ENCODE measurements at regions of chr3 and their contacts with region 1.

Region 1: GRCh38 chr3:41198950-41199865 is at the start of gene CTNNB1:
- DNase-seq: peak; percentile 96
- total RNA-seq, gene CTNNB1: 171 TPM

Region 2: GRCh38 chr3:40877631-40878463 is 321.4 kb before region 1 on chr3:
- intact Hi-C with region 1: loop called (anchors 2 kb)
- DNase-seq: peak; percentile 82

Region 3: DNA sequence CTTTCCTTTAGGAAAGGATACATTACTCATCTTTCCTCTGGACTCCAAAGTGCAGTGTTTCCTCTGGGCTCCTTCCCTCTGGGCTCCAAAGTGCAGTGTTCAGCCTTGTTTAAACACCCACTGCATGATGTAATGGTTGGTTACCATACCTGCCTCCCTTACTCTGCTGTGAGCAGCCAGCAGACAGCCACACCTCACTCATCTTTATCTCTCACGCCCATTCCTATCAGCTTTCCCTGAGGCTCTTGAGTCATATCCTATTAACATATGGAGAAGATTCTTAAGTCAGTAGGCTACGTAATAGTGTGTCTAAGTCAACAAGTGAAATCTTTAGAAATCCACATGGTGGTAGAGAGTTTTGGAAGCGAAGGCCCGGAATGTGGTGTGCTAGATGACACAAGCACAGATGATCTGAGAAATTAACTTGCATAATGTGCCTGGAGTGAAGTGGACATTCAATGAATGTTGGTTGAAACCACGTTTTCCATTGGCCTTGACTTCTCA is 97.1 kb before region 1 on chr3:
- intact Hi-C with region 1: no loop called
- DNase-seq: no peak

Region 4: DNA sequence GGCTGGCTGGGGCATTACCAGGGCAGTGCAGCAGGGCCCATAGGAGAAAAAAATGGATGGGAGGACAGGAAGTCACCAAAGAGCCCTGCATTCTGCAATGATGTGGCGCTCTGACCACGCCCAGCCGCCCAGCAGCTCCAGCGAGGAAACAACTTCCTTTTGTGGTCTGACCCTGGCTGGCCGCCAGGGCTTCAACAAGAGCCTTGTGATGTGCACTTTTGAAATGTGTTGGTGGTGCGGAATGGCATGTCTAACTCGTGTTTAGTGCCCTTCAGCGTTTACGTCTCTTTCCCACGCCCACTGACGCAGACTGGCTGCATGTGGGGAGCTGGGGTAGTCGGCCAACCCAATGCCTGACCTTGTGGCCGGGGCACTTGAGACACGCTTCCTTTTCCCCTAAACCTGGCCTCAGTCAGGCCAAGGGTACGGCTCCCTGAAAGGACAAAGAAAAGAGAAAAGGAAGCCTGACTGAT is 81.8 kb before region 1 on chr3:
- intact Hi-C with region 1: loop called (anchors 5 kb)
- DNase-seq: peak; percentile 94